ENCODE measurements at regions of chr7 and their contacts with region 1.

Region 1: DNA sequence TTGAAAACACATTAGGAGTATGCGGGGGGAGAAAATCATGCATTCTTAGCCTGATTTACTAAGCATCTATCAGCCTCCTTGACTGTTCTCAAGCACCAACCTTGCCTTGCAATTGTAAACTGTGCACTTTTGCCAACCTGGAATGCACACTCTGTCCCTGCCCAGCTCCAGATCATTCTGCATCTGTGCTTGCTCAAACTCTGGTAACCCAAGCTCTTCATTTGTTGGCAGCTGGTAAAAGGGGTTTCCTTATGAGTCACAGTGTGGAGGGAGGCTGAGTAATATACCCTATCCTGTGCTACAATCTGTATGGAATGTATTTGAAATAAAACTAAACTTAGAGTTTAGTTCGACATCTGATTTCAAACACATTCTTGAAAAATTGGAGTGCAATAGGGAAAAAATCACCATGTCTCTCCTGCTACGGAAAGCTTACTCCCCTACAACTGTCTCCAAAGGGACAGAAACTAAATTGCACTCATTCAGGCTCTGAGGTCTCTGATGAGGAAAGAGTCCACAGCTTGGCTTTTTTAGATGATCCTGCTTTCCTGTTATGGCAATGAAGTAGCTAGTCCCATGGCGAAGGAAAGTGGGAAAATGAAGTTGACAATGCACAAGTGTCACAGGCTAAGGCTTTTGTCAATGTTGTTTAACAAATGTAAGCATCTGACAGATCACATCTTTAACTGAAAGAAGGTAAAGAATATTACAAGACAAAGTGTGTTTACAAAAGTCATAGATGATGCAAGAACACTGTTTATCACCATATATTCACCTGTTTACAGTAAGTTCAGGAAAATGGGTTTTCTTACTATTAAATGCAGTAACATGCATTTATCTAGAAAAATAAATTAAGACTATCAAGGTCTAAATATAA is 61.9 kb downstream of the TES start:
- DNase-seq: peak; percentile 96
- ATAC-seq: peak; percentile 90
- H3K4me3 ChIP-seq: peak overlapping the region; percentile 59
- H3K27ac ChIP-seq: peak overlapping the region; percentile 96
- H3K4me1 ChIP-seq: peaks cover 50% of the 10 kb centered on the region
- H3K27me3 ChIP-seq: no peaks in the 10 kb centered on the region
- CTCF ChIP-seq: no peak

Region 2: DNA sequence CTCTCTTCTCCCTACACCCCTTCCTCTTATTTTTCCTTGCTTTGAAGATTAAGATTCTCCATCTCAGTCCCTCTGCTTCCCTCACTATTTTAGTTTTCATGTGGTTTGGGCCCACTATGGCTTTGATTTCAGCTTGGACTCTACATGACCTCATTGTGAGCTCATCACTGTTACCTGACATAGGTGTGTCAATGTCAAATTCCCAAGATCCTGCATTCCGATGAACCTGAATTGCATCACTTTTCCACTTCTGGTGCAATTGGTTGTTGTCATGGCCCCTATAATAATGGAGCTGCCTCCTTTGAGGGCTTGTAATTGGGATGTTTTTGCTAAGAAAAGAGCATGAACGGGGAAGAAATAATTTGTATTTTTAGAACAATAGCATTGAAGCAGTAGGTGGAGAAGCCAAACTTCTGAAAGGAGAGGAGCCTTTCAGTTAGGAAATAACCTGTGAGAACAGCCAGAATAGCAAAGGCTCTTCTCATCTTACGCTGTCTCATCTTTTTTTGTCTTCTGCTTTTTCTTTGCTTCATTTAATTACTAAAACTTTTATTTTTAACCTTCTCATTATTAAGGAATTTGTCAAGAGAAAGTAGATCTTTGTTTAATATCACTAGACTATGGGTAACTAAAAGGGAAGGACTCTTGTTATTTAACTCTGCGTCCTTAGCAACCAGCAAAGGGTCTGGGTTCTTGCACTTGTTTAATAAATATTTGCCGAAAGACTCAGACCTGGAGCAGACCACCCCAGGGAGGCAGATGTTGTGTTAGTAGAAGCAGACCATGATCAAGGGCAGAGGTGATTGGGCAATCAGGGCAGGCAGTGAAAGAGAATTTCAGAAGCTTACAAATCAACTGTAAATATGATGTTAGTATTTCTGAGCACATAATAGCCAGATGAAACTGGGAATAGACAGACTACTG is 33.5 kb after region 1 on chr7:
- CTCF ChIA-PET with region 1: no interaction called
- POLR2A ChIA-PET with region 1: no interaction called
- intact Hi-C with region 1: loop called (anchors 2 kb)
- DNase-seq: peak; percentile 7
- ATAC-seq: no peak
- H3K4me3 ChIP-seq: no peak overlapping the region
- H3K27ac ChIP-seq: no peak overlapping the region
- H3K4me1 ChIP-seq: no peaks in the 10 kb centered on the region
- H3K27me3 ChIP-seq: no peaks in the 10 kb centered on the region
- CTCF ChIP-seq: no peak

Region 3: GRCh38 chr7:116340943-116341907 is 69.0 kb after region 1 on chr7:
- CTCF ChIA-PET with region 1: no interaction called
- POLR2A ChIA-PET with region 1: no interaction called
- intact Hi-C with region 1: loop called (anchors 1 kb)
- DNase-seq: peak; percentile 27
- ATAC-seq: no peak
- H3K4me3 ChIP-seq: no peak overlapping the region
- H3K27ac ChIP-seq: peak overlapping the region; percentile 46
- H3K4me1 ChIP-seq: peaks cover 42% of the 10 kb centered on the region
- H3K27me3 ChIP-seq: no peaks in the 10 kb centered on the region
- CTCF ChIP-seq: peak; percentile 59

Region 4: GRCh38 chr7:116363637-116364432 is 91.6 kb after region 1 on chr7:
- CTCF ChIA-PET with region 1: no interaction called
- POLR2A ChIA-PET with region 1: no interaction called
- intact Hi-C with region 1: no loop called
- DNase-seq: peak; percentile 51
- ATAC-seq: peak; percentile 76
- H3K4me3 ChIP-seq: no peak overlapping the region
- H3K27ac ChIP-seq: peak overlapping the region; percentile 41
- H3K4me1 ChIP-seq: peaks cover 28% of the 10 kb centered on the region
- H3K27me3 ChIP-seq: no peaks in the 10 kb centered on the region
- CTCF ChIP-seq: no peak

Region 5: DNA sequence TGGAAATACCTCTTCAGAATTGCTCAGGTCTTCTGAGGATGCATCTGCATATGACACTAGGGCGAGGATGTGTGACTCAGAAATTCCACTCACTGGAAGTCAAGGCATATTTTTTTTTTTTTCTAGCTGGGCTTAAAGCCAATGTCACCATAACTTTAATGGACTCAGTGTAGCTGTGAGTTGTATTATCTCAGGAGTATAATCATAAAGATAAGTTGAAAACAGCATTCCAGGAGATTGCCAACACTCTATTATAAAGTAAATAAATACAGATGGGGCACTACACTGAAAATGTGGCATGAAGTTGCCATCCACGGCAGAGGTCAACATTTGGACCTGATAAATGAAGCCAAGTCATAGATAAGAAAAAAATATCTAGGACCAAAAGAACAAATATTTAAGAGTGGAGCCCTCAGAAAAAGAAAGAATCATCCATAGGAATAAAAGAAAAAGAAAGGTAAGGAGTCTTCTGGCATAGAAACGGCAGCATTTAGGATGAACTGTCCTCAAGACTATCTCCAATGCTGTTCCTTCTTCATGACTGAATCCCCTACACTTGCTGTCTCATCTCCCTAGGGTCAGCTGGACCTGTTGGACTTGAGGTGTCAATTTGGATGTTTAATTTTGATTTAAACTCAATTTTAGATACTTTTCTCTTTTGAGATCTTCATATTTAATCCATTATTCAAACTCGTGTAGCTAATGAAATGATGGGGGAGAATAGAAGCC is 154.4 kb after region 1 on chr7:
- CTCF ChIA-PET with region 1: no interaction called
- POLR2A ChIA-PET with region 1: no interaction called
- intact Hi-C with region 1: loop called (anchors 2 kb)
- DNase-seq: peak; percentile 96
- ATAC-seq: peak; percentile 70
- H3K4me3 ChIP-seq: no peak overlapping the region
- H3K27ac ChIP-seq: peak overlapping the region; percentile 52
- H3K4me1 ChIP-seq: peaks cover 30% of the 10 kb centered on the region
- H3K27me3 ChIP-seq: no peaks in the 10 kb centered on the region
- CTCF ChIP-seq: no peak

Region 6: GRCh38 chr7:116576350-116577319 is 304.4 kb after region 1 on chr7:
- CTCF ChIA-PET with region 1: no interaction called
- POLR2A ChIA-PET with region 1: no interaction called
- intact Hi-C with region 1: loop called (anchors 5 kb)
- DNase-seq: peak; percentile 95
- ATAC-seq: peak; percentile 96
- H3K4me3 ChIP-seq: peak overlapping the region; percentile 38; the same call in 1 of the 2 replicates
- H3K27ac ChIP-seq: peak overlapping the region; percentile 94
- H3K4me1 ChIP-seq: peaks cover 53% of the 10 kb centered on the region
- H3K27me3 ChIP-seq: no peaks in the 10 kb centered on the region
- CTCF ChIP-seq: no peak